MCF 10A (cell line): ENCODE measurements at regions of chrX and their contacts with region 1.

Region 1: DNA sequence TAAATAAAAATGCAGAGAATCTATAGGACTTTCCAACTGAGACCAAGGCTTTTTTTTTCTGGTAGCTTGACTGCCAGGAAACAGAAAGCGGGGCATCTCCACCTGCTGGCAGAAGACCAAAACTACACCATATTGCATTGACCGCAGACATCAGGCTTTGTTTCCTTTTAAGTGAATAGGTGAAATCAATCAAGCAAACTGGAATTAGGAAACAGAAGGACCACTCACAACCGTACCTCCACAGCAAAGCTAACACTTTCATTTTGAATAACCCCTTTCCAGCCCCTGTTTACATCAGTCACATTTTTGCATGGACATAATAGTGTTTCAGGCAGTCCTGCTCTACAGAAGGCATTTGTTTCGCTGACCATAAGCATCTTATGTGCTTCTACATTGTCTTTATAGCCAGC is 218.2 kb downstream of the IDS start:
- DNase-seq: peak; percentile 65
- H3K4me3 Mint-ChIP-seq: no peak overlapping the region
- H3K27ac Mint-ChIP-seq: no peak overlapping the region
- H3K4me1 Mint-ChIP-seq: no peaks in the 10 kb centered on the region
- H3K27me3 Mint-ChIP-seq: no peaks in the 10 kb centered on the region
- CTCF ChIP-seq: peak; percentile 65

Region 2: DNA sequence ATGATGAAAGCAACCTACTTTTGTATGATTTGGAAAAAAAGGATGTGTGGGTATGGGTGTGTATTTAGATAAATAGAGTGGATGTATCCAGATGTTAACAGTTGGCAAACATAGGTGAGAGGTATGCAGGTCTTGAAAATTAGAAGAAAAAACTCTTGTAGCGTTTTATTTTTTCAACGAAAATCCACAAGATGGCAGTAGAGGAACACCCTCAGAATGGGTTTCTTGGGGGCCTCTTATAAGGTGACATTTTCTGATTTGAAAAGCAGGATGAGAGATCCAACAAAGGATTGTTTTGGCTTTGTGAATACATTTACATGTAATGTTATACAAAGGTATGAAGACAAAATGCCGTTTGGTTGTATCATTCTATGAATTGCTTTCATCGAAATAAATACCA is 1237.5 kb before region 1 on chrX:
- CTCF ChIA-PET with region 1: interaction called, 9 read pairs
- POLR2A ChIA-PET with region 1: interaction called, 4 read pairs
- intact Hi-C with region 1: loop called (anchors 10 kb)
- DNase-seq: peak; percentile 38
- H3K4me3 Mint-ChIP-seq: no peak overlapping the region
- H3K27ac Mint-ChIP-seq: no peak overlapping the region
- H3K4me1 Mint-ChIP-seq: no peaks in the 10 kb centered on the region
- H3K27me3 Mint-ChIP-seq: no peaks in the 10 kb centered on the region
- CTCF ChIP-seq: peak; percentile 42

Region 3: DNA sequence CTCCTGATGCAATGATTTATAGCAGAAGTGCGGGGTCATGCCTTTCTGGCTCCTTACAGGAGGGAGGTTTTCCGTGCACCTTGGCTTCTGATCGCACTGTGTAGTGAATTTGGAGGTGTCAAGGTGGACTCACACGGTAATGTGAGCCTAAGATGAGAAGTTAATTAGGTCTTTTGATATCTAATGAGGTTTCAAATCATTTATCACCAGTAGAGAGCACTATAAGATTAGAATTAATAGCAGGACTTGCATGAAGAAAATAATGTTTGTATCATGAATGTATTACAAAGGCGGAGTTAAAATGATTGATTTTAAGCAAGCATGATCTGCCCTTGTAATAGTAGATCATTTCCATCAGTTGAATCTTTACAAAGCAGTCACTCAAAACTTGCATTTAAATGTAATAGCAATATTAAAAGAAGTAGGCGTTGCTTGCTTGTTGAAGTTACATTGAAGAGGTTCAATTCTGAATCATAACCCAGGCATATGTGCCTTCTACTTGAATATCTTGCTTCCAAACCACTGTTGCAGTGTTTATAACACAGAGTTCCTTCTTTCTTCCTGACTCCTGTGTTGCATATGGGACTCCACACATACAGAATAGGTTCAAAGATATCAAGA is 1153.7 kb before region 1 on chrX:
- CTCF ChIA-PET with region 1: interaction called, 18 read pairs
- POLR2A ChIA-PET with region 1: no interaction called
- intact Hi-C with region 1: loop called (anchors 1 kb)
- DNase-seq: peak; percentile 22
- H3K4me3 Mint-ChIP-seq: no peak overlapping the region
- H3K27ac Mint-ChIP-seq: no peak overlapping the region
- H3K4me1 Mint-ChIP-seq: peaks cover 5% of the 10 kb centered on the region
- H3K27me3 Mint-ChIP-seq: no peaks in the 10 kb centered on the region
- CTCF ChIP-seq: no peak

Region 4: GRCh38 chrX:148601034-148601433 is 685.9 kb before region 1 on chrX:
- CTCF ChIA-PET with region 1: no interaction called
- POLR2A ChIA-PET with region 1: no interaction called
- intact Hi-C with region 1: loop called (anchors 1 kb)
- DNase-seq: peak; percentile 38
- H3K4me3 Mint-ChIP-seq: no peak overlapping the region
- H3K27ac Mint-ChIP-seq: no peak overlapping the region
- H3K4me1 Mint-ChIP-seq: peaks cover 6% of the 10 kb centered on the region
- H3K27me3 Mint-ChIP-seq: no peaks in the 10 kb centered on the region
- CTCF ChIP-seq: no peak

Region 5: GRCh38 chrX:149259241-149259640 is 27.7 kb before region 1 on chrX:
- CTCF ChIA-PET with region 1: interaction called, 10 read pairs
- POLR2A ChIA-PET with region 1: no interaction called
- intact Hi-C with region 1: no loop called
- DNase-seq: peak; percentile 35
- H3K4me3 Mint-ChIP-seq: no peak overlapping the region
- H3K27ac Mint-ChIP-seq: no peak overlapping the region
- H3K4me1 Mint-ChIP-seq: peaks cover 5% of the 10 kb centered on the region
- H3K27me3 Mint-ChIP-seq: no peaks in the 10 kb centered on the region
- CTCF ChIP-seq: no peak

Region 6: DNA sequence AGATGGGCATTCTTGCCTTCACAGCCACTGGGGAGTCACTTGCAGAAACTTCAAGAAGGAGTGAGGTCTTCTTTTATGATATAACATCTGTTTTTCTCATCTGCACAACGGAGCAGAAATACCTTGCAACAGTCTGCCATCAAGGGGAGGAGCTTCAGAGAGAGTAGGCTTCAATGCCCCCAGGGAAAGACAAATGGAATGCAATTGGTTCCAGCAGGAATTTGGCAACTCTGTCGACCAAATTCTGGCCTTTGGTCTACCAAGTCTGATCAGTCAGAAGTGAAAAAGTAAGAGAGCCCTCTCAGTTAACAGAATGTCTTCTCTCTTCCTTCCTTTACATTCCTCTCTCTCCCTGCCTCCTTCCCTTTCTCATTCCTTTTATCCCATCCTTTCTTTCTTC is 11.1 kb before region 1 on chrX:
- CTCF ChIA-PET with region 1: interaction called, 10 read pairs
- POLR2A ChIA-PET with region 1: no interaction called
- intact Hi-C with region 1: no loop called
- DNase-seq: peak; percentile 56
- H3K4me3 Mint-ChIP-seq: no peak overlapping the region
- H3K27ac Mint-ChIP-seq: no peak overlapping the region
- H3K4me1 Mint-ChIP-seq: peaks cover 24% of the 10 kb centered on the region
- H3K27me3 Mint-ChIP-seq: no peaks in the 10 kb centered on the region
- CTCF ChIP-seq: no peak